Naive thymus-derived CD4-positive, alpha-beta T cell (primary cell): ENCODE measurements at regions of chr3 and their contacts with region 1.

Region 1: GRCh38 chr3:66500576-66501482 is at the start of gene LRIG1:
- DNase-seq: peak; percentile 86 to 99 (median 92)
- ATAC-seq: peak; percentile 96
- H3K4me3 ChIP-seq: peak within 1 kb of the TSS; percentile 61
- H3K4me3 Mint-ChIP-seq: peak within 1 kb of the TSS; percentile 89 to 98 (median 94)
- H3K27ac ChIP-seq: peak within 1 kb of the TSS; percentile 60
- H3K27ac Mint-ChIP-seq: peak within 1 kb of the TSS; percentile 53 to 87 (median 74)
- H3K4me1 ChIP-seq: peaks cover 39 to 42% of the 10 kb centered on the region in 2 donors
- H3K4me1 Mint-ChIP-seq: peaks cover 38 to 69% (median 64%) of the 10 kb centered on the region in 7 donors
- H3K27me3 ChIP-seq: no peaks in the 10 kb centered on the region
- H3K27me3 Mint-ChIP-seq: peaks cover 0 to 36% (median 5%) of the 10 kb centered on the region in 5 donors
- total RNA-seq, gene LRIG1: 28.5 to 46.3 (median 34.4) TPM

Region 2: DNA sequence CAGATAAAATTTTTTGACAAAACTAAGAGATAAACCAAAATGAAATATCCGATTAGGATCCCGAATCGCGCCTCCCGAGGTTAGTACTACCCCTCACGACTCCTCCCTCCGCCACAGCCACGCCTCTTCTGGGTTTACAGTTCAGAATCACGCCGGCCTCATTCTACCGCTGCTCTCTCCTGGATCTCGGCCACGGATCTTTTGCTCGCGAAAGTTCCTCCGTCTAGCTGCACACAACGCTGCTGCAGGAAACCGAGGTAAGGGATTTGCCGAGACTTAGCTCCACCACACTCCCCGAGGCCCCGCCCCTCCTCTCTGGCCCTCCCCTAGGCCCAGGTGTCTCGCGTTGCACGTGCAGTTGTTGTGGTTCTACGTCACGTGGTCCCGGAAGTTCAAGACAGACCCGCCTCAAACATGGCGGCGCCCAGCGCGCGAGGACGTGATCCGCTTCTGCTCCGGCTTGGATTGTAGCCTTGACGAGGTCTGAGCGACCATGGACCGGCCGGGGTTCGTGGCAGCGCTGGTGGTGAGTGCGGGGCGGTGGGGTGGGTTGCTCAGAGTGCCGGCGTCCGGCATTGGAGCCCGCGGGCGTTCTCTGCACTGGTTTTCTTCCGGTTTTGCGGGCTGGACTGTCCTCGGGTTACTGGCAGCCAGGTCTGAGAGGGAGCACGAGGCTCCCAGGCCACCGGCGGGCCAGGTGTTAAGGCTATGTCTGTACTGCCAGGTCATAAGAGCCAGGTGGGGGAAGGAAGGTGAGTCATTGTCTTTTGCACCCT is 280.0 kb before region 1 on chr3 and contains the start of gene SLC25A26:
- CTCF ChIA-PET with region 1: no interaction called
- POLR2A ChIA-PET with region 1: no interaction called
- intact Hi-C with region 1: loop called (anchors 1 kb)
- DNase-seq: peak; percentile 90 to 99 (median 97)
- ATAC-seq: peak; percentile 99
- H3K4me3 ChIP-seq: peak within 1 kb of the TSS; percentile 70
- H3K4me3 Mint-ChIP-seq: peak within 1 kb of the TSS; percentile 91 to 99 (median 96)
- H3K27ac ChIP-seq: peak within 1 kb of the TSS; percentile 90
- H3K27ac Mint-ChIP-seq: peak within 1 kb of the TSS; percentile 85 to 98 (median 95)
- H3K4me1 ChIP-seq: peaks cover 7% of the 10 kb centered on the region in 2 donors
- H3K4me1 Mint-ChIP-seq: peaks cover 15 to 55% (median 44%) of the 10 kb centered on the region in 7 donors
- H3K27me3 ChIP-seq: no peaks in the 10 kb centered on the region
- H3K27me3 Mint-ChIP-seq: peaks cover 0 to 2% (median 0%) of the 10 kb centered on the region in 5 donors
- total RNA-seq, gene SLC25A26: 14.1 to 25.5 (median 17.9) TPM

Region 3: DNA sequence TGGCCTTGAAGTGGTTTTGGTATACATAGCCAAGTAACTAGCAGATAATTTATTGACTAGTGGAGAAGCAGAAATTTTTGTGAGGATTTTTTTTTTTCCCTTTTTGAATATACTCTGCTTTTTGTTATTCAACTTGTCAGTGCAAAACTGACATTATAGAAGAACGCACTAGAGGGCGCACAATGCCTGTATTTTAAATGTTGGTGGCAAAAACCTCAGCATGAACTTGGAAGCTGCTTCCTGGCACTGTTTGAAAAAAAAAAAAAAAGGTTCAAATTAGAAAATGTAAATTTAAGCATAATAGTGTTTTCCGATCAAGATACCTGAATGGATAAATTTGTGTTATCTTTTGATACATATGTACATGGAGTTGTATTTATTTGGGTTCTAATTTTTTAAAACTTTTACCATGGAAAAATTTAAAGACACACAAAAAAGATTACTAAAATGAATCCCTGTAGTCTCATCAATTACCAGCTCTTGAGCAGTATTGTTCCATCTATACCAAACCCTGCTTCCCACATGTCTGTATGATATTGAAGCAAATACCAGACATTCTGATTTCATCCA is 224.0 kb before region 1 on chr3:
- CTCF ChIA-PET with region 1: interaction called, 5 read pairs
- POLR2A ChIA-PET with region 1: no interaction called
- intact Hi-C with region 1: loop called (anchors 2 kb)
- DNase-seq: peak; percentile 19 to 68 (median 56)
- ATAC-seq: peak; percentile 81
- H3K4me3 ChIP-seq: no peak overlapping the region
- H3K4me3 Mint-ChIP-seq: no peak overlapping the region
- H3K27ac ChIP-seq: no peak overlapping the region
- H3K27ac Mint-ChIP-seq: peak overlapping the region in 5 of 9 donors; percentile 9 to 61 (median 24)
- H3K4me1 ChIP-seq: peaks cover 12 to 28% of the 10 kb centered on the region in 2 donors
- H3K4me1 Mint-ChIP-seq: peaks cover 15 to 37% (median 34%) of the 10 kb centered on the region in 7 donors
- H3K27me3 ChIP-seq: no peaks in the 10 kb centered on the region
- H3K27me3 Mint-ChIP-seq: no peaks in the 10 kb centered on the region

Region 4: GRCh38 chr3:66394019-66394752 is 106.6 kb before region 1 on chr3:
- CTCF ChIA-PET with region 1: interaction called, 3 read pairs
- POLR2A ChIA-PET with region 1: no interaction called
- intact Hi-C with region 1: loop called in 1 of 2 experiments (anchors 1 kb)
- DNase-seq: peak in 8 of 9 donors; percentile 19 to 74 (median 64)
- ATAC-seq: peak; percentile 96
- H3K4me3 ChIP-seq: peak overlapping the region; percentile 45
- H3K4me3 Mint-ChIP-seq: peak overlapping the region; percentile 73 to 97 (median 87)
- H3K27ac ChIP-seq: peak overlapping the region; percentile 48
- H3K27ac Mint-ChIP-seq: peak overlapping the region; percentile 82 to 98 (median 95)
- H3K4me1 ChIP-seq: peaks cover 20 to 47% of the 10 kb centered on the region in 2 donors
- H3K4me1 Mint-ChIP-seq: peaks cover 26 to 62% (median 61%) of the 10 kb centered on the region in 7 donors
- H3K27me3 ChIP-seq: no peaks in the 10 kb centered on the region
- H3K27me3 Mint-ChIP-seq: no peaks in the 10 kb centered on the region

Region 5: GRCh38 chr3:66472313-66473134 is 28.3 kb before region 1 on chr3:
- CTCF ChIA-PET with region 1: no interaction called
- POLR2A ChIA-PET with region 1: no interaction called
- intact Hi-C with region 1: loop called in 1 of 2 experiments (anchors 1 kb)
- DNase-seq: peak in 1 of 9 donors; percentile 52
- ATAC-seq: peak; percentile 74
- H3K4me3 ChIP-seq: peak overlapping the region; percentile 19
- H3K4me3 Mint-ChIP-seq: peak overlapping the region in 8 of 10 donors; percentile 0 to 70 (median 26)
- H3K27ac ChIP-seq: no peak overlapping the region
- H3K27ac Mint-ChIP-seq: peak overlapping the region in 2 of 9 donors; percentile 29 to 88
- H3K4me1 ChIP-seq: peaks cover 8 to 23% of the 10 kb centered on the region in 2 donors
- H3K4me1 Mint-ChIP-seq: peaks cover 13 to 44% (median 30%) of the 10 kb centered on the region in 7 donors
- H3K27me3 ChIP-seq: no peaks in the 10 kb centered on the region
- H3K27me3 Mint-ChIP-seq: no peaks in the 10 kb centered on the region

Region 6: GRCh38 chr3:66490214-66490613 is 10.6 kb before region 1 on chr3:
- CTCF ChIA-PET with region 1: no interaction called
- POLR2A ChIA-PET with region 1: interaction called, 6 read pairs
- intact Hi-C with region 1: loop called in 1 of 2 experiments (anchors 1 kb)
- DNase-seq: no peak
- ATAC-seq: peak; percentile 40
- H3K4me3 ChIP-seq: peak overlapping the region; percentile 23
- H3K4me3 Mint-ChIP-seq: peak overlapping the region; percentile 61 to 81 (median 70)
- H3K27ac ChIP-seq: peak overlapping the region; percentile 38
- H3K27ac Mint-ChIP-seq: peak overlapping the region; percentile 65 to 96 (median 83)
- H3K4me1 ChIP-seq: peaks cover 57 to 59% of the 10 kb centered on the region in 2 donors
- H3K4me1 Mint-ChIP-seq: peaks cover 47 to 89% (median 86%) of the 10 kb centered on the region in 7 donors
- H3K27me3 ChIP-seq: no peaks in the 10 kb centered on the region
- H3K27me3 Mint-ChIP-seq: peaks cover 0 to 7% (median 0%) of the 10 kb centered on the region in 5 donors

Region 7: DNA sequence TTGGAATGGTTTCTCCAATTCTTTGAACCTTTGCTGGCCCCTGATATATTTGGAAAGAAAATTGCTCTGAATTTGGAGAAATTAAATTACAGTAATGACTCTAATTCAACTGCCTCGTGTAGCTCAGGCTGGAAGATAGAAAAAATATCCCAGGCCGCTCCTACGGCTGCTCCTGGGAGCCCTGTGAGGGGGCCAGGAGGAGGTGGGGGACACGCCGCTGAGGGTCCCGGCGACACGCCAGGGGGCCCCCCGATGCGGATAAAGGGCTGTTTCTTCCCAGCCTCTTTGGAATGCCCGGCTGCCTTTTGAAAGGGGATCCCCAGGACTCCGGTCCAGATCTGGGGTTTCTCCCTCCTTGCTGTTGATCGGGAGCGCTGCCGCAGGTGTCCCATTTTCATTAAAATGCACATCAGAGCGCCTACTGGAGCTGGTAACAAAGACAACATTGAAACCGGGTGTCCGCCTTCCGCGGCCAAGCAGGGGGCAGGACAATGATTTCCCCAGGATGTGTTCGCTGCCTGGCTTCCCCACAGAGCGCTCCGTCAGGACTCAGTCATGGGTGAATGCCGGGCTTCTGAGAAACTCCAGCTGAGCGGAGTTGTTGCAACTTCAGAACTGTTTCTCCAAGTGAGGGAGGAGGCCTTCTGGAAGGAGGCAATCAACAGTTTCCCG is 297.2 kb after region 1 on chr3:
- CTCF ChIA-PET with region 1: no interaction called
- POLR2A ChIA-PET with region 1: no interaction called
- intact Hi-C with region 1: no loop called
- DNase-seq: no peak
- ATAC-seq: no peak
- H3K4me3 ChIP-seq: no peak overlapping the region
- H3K4me3 Mint-ChIP-seq: no peak overlapping the region
- H3K27ac ChIP-seq: no peak overlapping the region
- H3K27ac Mint-ChIP-seq: no peak overlapping the region
- H3K4me1 ChIP-seq: peaks cover 0 to under 1% of the 10 kb centered on the region in 2 donors
- H3K4me1 Mint-ChIP-seq: no peaks in the 10 kb centered on the region
- H3K27me3 ChIP-seq: no peaks in the 10 kb centered on the region
- H3K27me3 Mint-ChIP-seq: peaks cover 18 to 30% (median 23%) of the 10 kb centered on the region in 5 donors

Region 8: GRCh38 chr3:66998113-66998903 is 497.5 kb after region 1 on chr3 and contains the start of gene KBTBD8:
- CTCF ChIA-PET with region 1: no interaction called
- POLR2A ChIA-PET with region 1: no interaction called
- intact Hi-C with region 1: loop called (anchors 1 kb)
- DNase-seq: peak; percentile 87 to 99 (median 98)
- ATAC-seq: peak; percentile 97
- H3K4me3 ChIP-seq: peak within 1 kb of the TSS; percentile 69
- H3K4me3 Mint-ChIP-seq: peak within 1 kb of the TSS; percentile 85 to 99 (median 96)
- H3K27ac ChIP-seq: peak within 1 kb of the TSS; percentile 75
- H3K27ac Mint-ChIP-seq: peak within 1 kb of the TSS; percentile 68 to 96 (median 93)
- H3K4me1 ChIP-seq: peaks cover 7 to 19% of the 10 kb centered on the region in 2 donors
- H3K4me1 Mint-ChIP-seq: peaks cover 4 to 39% (median 27%) of the 10 kb centered on the region in 7 donors
- H3K27me3 ChIP-seq: no peaks in the 10 kb centered on the region
- H3K27me3 Mint-ChIP-seq: peaks cover 10 to 33% (median 27%) of the 10 kb centered on the region in 5 donors
- total RNA-seq, gene KBTBD8: 4.5 to 14.6 (median 9.5) TPM